ENCODE measurements at regions of chr14 and their contacts with region 1.

Region 1: DNA sequence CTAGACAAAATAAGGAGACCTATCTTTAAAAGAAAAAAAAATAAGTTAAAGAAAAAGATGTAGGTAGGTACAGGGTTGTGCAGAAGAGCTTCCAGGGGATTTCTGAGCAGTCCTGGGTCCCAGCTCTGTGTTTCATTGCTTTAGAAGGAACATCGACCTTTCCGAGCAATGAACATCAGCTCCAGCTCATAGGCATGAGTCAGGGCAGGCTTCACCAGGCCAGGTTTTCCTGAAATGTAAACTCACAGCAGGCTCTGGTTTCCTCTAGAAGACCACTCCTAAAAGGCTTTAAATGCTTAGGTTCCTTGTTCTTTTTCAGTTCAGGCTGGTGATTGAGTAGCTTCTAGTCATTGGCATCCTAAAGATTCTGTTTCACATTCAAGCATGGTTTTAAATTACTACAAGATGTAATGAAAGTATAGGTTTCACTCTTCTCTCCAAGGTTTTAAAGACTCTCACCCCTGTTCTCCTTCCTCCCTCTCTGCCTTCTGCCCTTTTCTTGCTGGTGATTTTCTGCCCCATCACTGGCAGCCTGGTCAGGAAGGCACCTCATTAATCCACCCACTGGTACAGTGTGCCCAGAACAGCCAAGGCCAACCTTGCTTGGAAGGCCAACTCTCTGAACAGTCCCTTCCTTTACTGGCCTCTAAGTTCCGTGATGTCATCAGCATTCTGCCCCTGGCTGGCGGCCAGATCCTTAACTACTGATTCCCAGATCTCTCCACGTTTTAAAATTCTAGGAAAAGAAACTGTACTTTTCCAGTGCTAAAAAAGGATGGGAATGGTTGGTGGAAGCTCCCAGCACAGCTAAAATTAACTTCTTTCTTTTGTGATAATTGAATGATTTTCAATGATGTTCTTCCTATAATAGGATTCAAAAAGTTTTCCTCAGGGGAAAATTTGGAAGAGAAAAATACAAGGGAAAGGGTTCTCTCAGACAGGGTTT is 109.4 kb upstream of the HIF1A start:
- DNase-seq: no peak
- H3K4me3 ChIP-seq: no peak overlapping the region
- H3K27ac ChIP-seq: no peak overlapping the region
- H3K4me1 ChIP-seq: peaks cover 0 to 2% (median 0%) of the 10 kb centered on the region in 4 experiments; a peak in 1 of 7 replicates
- H3K27me3 ChIP-seq: no peaks in the 10 kb centered on the region
- CTCF ChIP-seq: no peak
- EP300 ChIP-seq: no peak
- POLR2A ChIP-seq: no peak
- RAD21 ChIP-seq: no peak

Region 2: DNA sequence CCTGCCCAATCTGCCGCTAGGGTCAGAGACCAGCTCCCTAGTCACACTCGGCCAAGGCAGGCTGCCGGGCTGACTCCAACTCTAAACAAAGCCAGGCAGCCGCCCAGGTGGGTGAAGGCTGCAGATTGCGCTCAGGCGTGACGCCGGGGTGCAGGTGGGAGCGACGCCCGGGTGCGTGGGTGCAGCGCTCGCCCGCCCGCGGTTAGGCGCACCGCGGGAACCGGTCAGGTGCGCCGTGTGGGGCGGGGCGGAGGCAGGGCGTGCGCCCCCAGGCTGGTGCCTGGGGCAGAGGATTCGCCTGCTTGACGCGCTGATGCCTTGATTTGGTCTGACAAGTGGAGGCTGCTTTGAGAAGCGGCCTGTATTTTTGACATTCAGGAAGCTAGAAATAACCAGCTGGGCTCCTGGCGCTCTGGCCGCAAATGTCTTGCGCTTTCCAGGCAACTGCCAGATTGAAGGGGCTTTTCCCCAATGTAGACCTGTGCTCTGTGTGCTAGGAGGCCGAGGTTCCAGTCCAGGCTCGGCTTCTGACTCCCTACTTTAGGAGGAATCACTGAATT is 17.2 kb before region 1 on chr14:
- CTCF ChIA-PET with region 1: interaction called, 10 read pairs
- POLR2A ChIA-PET with region 1: no interaction called
- DNase-seq: peak in 1 of 2 experiments; percentile 76
- H3K4me3 ChIP-seq: peak overlapping the region; percentile 21 to 59 (median 44); a peak in 7 of 8 replicates
- H3K27ac ChIP-seq: no peak overlapping the region
- H3K4me1 ChIP-seq: peaks cover 4 to 17% (median 13%) of the 10 kb centered on the region in 4 experiments
- H3K27me3 ChIP-seq: peaks cover 0 to 6% (median 2%) of the 10 kb centered on the region in 4 experiments; a peak in 4 of 7 replicates
- CTCF ChIP-seq: peak; percentile 20 to 31 (median 23); a peak in 3 of 4 replicates
- EP300 ChIP-seq: no peak
- POLR2A ChIP-seq: no peak
- RAD21 ChIP-seq: peak in 1 of 2 experiments; percentile 22; a peak in 2 of 4 replicates

Region 3: GRCh38 chr14:61644834-61645233 is 59.0 kb after region 1 on chr14:
- CTCF ChIA-PET with region 1: no interaction called
- POLR2A ChIA-PET with region 1: no interaction called
- DNase-seq: no peak
- H3K4me3 ChIP-seq: no peak overlapping the region
- H3K27ac ChIP-seq: no peak overlapping the region
- H3K4me1 ChIP-seq: no peaks in the 10 kb centered on the region
- H3K27me3 ChIP-seq: no peaks in the 10 kb centered on the region
- CTCF ChIP-seq: no peak
- EP300 ChIP-seq: no peak
- POLR2A ChIP-seq: no peak
- RAD21 ChIP-seq: no peak

Measured in H1 (cell line).